Astrocyte of the cerebellum (primary cell): ENCODE measurements at regions of chr5 and their contacts with region 1.

Region 1: DNA sequence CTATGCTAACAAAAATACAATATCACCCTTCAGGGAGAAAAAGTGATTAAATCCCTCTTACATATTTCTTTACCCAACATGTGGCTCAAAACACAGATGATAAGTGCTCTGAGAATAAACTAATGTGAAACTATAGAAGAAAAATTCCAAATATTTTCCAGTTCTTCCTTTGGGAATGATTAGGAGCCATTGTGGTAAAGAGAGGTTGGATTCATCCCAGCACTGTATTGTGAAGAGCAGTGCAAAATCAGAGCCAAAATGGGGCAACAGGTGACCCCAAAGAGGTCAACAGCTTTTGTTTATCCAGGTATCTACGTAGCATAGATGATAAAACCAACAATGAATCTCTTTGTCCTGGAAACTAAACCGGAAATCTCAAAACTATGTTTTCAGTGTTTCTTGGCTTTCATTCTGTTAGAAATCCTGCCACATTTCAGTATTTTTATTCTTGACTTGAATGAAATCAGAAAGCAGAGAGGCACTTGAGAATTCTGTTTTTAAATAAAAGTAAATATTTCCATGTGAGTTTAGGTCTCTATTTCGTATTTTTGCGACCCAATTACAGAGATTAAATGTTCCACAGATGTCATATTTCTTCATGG is 120.4 kb upstream of the FST start:
- DNase-seq: no peak
- H3K4me3 ChIP-seq: no peak overlapping the region
- CTCF ChIP-seq: no peak

Region 2: GRCh38 chr5:53262348-53262970 is 97.6 kb before region 1 on chr5:
- in situ Hi-C with region 1: loop called (anchors 5 kb)
- DNase-seq: peak; percentile 32
- H3K4me3 ChIP-seq: no peak overlapping the region
- CTCF ChIP-seq: peak; percentile 66